ENCODE measurements at regions of chr10 and their contacts with region 1.

Region 1: GRCh38 chr10:110528224-110528997 is 30.7 kb downstream of the DUSP5 start:
- DNase-seq: no peak
- H3K4me3 ChIP-seq: no peak overlapping the region
- H3K4me3 Mint-ChIP-seq: peak overlapping the region in 6 of 8 donors; percentile 35 to 80 (median 73)
- H3K27ac ChIP-seq: no peak overlapping the region
- H3K27ac Mint-ChIP-seq: peak overlapping the region; percentile 39 to 86 (median 73)
- H3K4me1 ChIP-seq: peaks cover 27% of the 10 kb centered on the region
- H3K4me1 Mint-ChIP-seq: peaks cover 19 to 35% (median 28%) of the 10 kb centered on the region in 4 donors
- H3K27me3 ChIP-seq: no peaks in the 10 kb centered on the region
- H3K27me3 Mint-ChIP-seq: no peaks in the 10 kb centered on the region

Region 2: GRCh38 chr10:110502851-110503301 is 25.5 kb before region 1 on chr10:
- CTCF ChIA-PET with region 1: interaction called, 6 read pairs
- POLR2A ChIA-PET with region 1: interaction called, 13 read pairs
- intact Hi-C with region 1: loop called (anchors 2 kb)
- DNase-seq: peak in 1 of 5 donors; percentile 14
- H3K4me3 ChIP-seq: peak overlapping the region in 1 of 2 donors; percentile 28
- H3K4me3 Mint-ChIP-seq: peak overlapping the region; percentile 61 to 98 (median 94)
- H3K27ac ChIP-seq: peak overlapping the region; percentile 79
- H3K27ac Mint-ChIP-seq: peak overlapping the region; percentile 90 to 97 (median 95)
- H3K4me1 ChIP-seq: peaks cover 80% of the 10 kb centered on the region
- H3K4me1 Mint-ChIP-seq: peaks cover 64 to 90% (median 81%) of the 10 kb centered on the region in 4 donors
- H3K27me3 ChIP-seq: no peaks in the 10 kb centered on the region
- H3K27me3 Mint-ChIP-seq: no peaks in the 10 kb centered on the region

Region 3: DNA sequence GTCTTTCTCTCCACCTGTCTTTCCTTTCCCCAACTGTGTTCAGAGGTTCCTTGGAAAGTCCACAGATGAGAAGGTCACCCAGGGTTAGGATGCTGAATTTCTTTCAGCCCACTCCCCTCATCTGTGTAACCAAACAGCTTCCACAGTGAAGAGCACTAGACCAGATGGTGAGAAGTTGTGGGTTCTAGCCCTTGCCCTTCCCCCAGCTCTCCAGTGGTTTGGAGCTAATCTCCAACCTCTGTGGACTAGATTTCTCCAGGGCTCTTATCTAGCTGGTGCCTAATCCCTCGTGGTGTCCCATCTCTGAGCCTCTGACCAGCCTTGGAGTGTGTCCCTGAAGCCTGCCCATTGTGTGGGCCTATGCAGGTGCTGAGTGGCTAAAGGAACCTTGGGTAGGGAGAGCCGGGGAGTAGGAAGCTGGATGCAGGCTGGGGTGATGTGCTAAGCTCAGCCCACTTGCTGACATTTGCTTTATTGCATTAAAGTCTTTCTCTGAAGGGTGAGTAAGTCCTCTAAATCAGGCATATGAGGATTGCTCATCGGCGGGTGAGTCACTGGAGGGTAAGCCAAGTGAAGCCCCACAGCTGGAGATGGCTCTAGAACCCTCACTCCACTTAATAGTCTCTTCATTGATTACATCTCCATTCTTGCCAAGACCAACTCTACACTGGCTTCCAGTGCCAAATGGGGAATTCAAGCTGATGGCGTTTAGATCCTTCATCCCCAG is 15.8 kb before region 1 on chr10:
- CTCF ChIA-PET with region 1: interaction called, 4 read pairs
- POLR2A ChIA-PET with region 1: no interaction called
- intact Hi-C with region 1: loop called (anchors 2 kb)
- DNase-seq: no peak
- H3K4me3 ChIP-seq: no peak overlapping the region
- H3K4me3 Mint-ChIP-seq: no peak overlapping the region
- H3K27ac ChIP-seq: no peak overlapping the region
- H3K27ac Mint-ChIP-seq: peak overlapping the region in 6 of 7 donors; percentile 6 to 60 (median 18)
- H3K4me1 ChIP-seq: no peaks in the 10 kb centered on the region
- H3K4me1 Mint-ChIP-seq: peaks cover 4 to 25% (median 12%) of the 10 kb centered on the region in 4 donors
- H3K27me3 ChIP-seq: no peaks in the 10 kb centered on the region
- H3K27me3 Mint-ChIP-seq: no peaks in the 10 kb centered on the region